CD8-positive, alpha-beta T cell (primary cell): ENCODE measurements at regions of chrX and their contacts with region 1.

Region 1: GRCh38 chrX:49002091-49002935 is at the start of gene GRIPAP1:
- DNase-seq: peak; percentile 63 to 95 (median 74)
- ATAC-seq: peak; percentile 79
- H3K4me3 ChIP-seq: peak within 1 kb of the TSS; percentile 82 to 87
- H3K4me3 Mint-ChIP-seq: peak within 1 kb of the TSS; percentile 98
- H3K27ac ChIP-seq: peak within 1 kb of the TSS; percentile 96 to 99
- H3K27ac Mint-ChIP-seq: peak within 1 kb of the TSS; percentile 99
- H3K4me1 ChIP-seq: peaks cover 16% of the 10 kb centered on the region
- H3K4me1 Mint-ChIP-seq: peaks cover 31% of the 10 kb centered on the region
- H3K27me3 ChIP-seq: no peaks in the 10 kb centered on the region
- H3K27me3 Mint-ChIP-seq: no peaks in the 10 kb centered on the region
- CTCF ChIP-seq: no peak
- total RNA-seq, gene GRIPAP1: 102 to 114 TPM

Region 2: DNA sequence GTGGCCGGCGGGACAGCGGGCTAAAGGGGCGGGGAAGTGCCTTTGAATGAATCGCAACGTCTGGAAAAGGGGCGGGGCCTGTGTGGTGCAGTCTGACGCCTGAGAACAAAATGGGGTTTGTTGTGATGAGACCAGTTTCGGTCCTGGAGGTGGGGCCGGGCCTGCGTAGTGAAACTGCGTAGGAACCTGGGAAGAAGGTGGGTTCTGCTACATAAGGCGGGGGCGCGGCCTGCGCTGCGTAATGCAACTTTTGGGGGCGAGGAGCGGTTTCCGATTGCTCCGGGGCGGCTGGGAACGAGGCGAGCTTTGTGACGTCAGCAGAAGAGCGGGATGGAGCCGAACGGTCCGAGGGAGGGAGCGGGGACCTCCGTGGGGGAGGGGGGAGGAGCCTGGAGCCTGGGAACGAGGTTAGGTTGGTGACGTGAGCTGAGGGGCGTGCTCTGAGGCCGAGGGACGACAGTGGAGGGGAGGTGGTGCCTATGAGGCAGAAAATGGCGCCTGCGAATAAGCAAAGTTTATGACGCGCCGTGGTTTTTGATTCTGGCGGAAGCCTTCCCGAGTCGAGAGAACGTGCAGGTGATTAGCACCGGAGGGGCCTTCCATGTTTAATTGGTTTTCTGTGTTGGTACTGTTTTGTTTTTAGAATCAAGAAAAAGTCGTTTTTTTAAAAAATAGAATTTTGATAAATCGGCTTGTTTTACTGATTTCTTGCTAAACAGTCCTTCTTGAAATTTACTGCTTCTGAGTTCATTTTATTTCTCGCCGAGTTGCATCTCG is 1768.8 kb before region 1 on chrX:
- CTCF ChIA-PET with region 1: no interaction called
- POLR2A ChIA-PET with region 1: no interaction called
- intact Hi-C with region 1: loop called in 1 of 2 experiments (anchors 5 kb)
- DNase-seq: peak; percentile 81 to 98 (median 95)
- ATAC-seq: peak; percentile 89
- H3K4me3 ChIP-seq: peak overlapping the region; percentile 77 to 96
- H3K4me3 Mint-ChIP-seq: peak overlapping the region; percentile 96
- H3K27ac ChIP-seq: peak overlapping the region; percentile 100
- H3K27ac Mint-ChIP-seq: peak overlapping the region; percentile 99
- H3K4me1 ChIP-seq: peaks cover 34% of the 10 kb centered on the region
- H3K4me1 Mint-ChIP-seq: peaks cover 40% of the 10 kb centered on the region
- H3K27me3 ChIP-seq: no peaks in the 10 kb centered on the region
- H3K27me3 Mint-ChIP-seq: no peaks in the 10 kb centered on the region
- CTCF ChIP-seq: no peak

Region 3: GRCh38 chrX:48597353-48598264 is 404.7 kb before region 1 on chrX and contains the start of gene WDR13:
- CTCF ChIA-PET with region 1: no interaction called
- POLR2A ChIA-PET with region 1: no interaction called
- intact Hi-C with region 1: loop called in 1 of 2 experiments (anchors 2 kb)
- DNase-seq: peak; percentile 79 to 94 (median 90)
- ATAC-seq: peak; percentile 82
- H3K4me3 ChIP-seq: peak within 1 kb of the TSS; percentile 90 to 99
- H3K4me3 Mint-ChIP-seq: peak within 1 kb of the TSS; percentile 94
- H3K27ac ChIP-seq: peak within 1 kb of the TSS; percentile 100
- H3K27ac Mint-ChIP-seq: peak within 1 kb of the TSS; percentile 100
- H3K4me1 ChIP-seq: peaks cover 7% of the 10 kb centered on the region
- H3K4me1 Mint-ChIP-seq: peaks cover 10% of the 10 kb centered on the region
- H3K27me3 ChIP-seq: no peaks in the 10 kb centered on the region
- H3K27me3 Mint-ChIP-seq: no peaks in the 10 kb centered on the region
- CTCF ChIP-seq: no peak
- total RNA-seq, gene WDR13: 41.6 to 51.6 TPM

Region 4: GRCh38 chrX:49073601-49074571 is 71.6 kb after region 1 on chrX and contains the start of gene PRAF2:
- CTCF ChIA-PET with region 1: no interaction called
- POLR2A ChIA-PET with region 1: no interaction called
- intact Hi-C with region 1: loop called in 1 of 2 experiments (anchors 2 kb)
- DNase-seq: peak; percentile 74 to 95 (median 89)
- ATAC-seq: peak; percentile 96
- H3K4me3 ChIP-seq: peak within 1 kb of the TSS; percentile 64 to 76
- H3K4me3 Mint-ChIP-seq: peak within 1 kb of the TSS; percentile 79
- H3K27ac ChIP-seq: peak within 1 kb of the TSS; percentile 81 to 82
- H3K27ac Mint-ChIP-seq: peak within 1 kb of the TSS; percentile 91
- H3K4me1 ChIP-seq: peaks cover 13% of the 10 kb centered on the region
- H3K4me1 Mint-ChIP-seq: peaks cover 17% of the 10 kb centered on the region
- H3K27me3 ChIP-seq: no peaks in the 10 kb centered on the region
- H3K27me3 Mint-ChIP-seq: no peaks in the 10 kb centered on the region
- CTCF ChIP-seq: no peak
- total RNA-seq, gene PRAF2: 16.7 to 17.5 TPM

Region 5: GRCh38 chrX:49656533-49656932 is 654.2 kb after region 1 on chrX:
- CTCF ChIA-PET with region 1: no interaction called
- POLR2A ChIA-PET with region 1: no interaction called
- intact Hi-C with region 1: no loop called
- DNase-seq: no peak
- ATAC-seq: no peak
- H3K4me3 ChIP-seq: no peak overlapping the region
- H3K4me3 Mint-ChIP-seq: no peak overlapping the region
- H3K27ac ChIP-seq: no peak overlapping the region
- H3K27ac Mint-ChIP-seq: no peak overlapping the region
- H3K4me1 ChIP-seq: no peaks in the 10 kb centered on the region
- H3K4me1 Mint-ChIP-seq: no peaks in the 10 kb centered on the region
- H3K27me3 ChIP-seq: no peaks in the 10 kb centered on the region
- H3K27me3 Mint-ChIP-seq: no peaks in the 10 kb centered on the region
- CTCF ChIP-seq: no peak